RWPE1 (cell line): ENCODE measurements at regions of chr17 and their contacts with region 1.

Region 1: DNA sequence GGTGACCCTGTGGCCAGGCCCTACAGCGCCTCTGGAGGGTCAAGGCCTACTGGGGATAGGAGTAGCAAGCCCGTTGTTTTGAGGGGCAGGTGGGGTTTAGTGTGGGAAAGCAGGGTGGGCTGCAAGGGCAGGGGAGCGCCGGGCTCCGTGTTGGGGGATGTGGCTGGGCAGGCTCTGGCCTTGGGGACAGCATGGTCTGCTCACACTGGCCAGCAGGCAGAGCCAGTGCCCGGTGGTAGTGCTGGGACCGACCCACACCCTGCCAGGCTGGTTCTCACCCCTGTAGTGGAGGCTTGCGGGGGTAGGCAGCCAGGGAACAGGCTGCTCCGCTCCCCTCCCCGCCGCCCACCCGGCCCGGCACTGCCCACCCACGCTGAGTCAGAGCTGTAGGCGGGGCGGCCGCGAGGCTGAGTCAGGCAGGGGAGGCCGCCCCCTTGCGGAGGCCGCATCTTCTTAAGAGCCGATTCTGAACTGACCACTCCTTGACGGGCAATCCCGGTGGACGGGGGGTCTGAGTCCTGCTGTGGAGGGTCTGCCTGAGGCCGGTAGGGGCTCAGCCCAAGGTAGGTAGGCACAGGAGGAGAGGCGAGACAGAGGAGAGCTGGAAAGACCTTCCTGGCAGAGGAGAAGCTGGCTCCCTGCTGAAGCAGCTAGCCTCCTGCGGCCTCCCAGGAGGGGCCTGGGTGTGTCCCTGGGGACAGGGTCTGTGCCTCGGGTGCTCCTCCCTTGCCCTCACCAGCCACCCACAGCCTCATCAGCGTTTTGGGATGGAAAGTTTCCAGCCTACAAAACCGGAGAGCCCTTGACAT is 62.4 kb downstream of the BAIAP2 start:
- DNase-seq: peak; percentile 64
- H3K27ac ChIP-seq: peak overlapping the region; percentile 99
- CTCF ChIP-seq: peak; percentile 87

Region 2: DNA sequence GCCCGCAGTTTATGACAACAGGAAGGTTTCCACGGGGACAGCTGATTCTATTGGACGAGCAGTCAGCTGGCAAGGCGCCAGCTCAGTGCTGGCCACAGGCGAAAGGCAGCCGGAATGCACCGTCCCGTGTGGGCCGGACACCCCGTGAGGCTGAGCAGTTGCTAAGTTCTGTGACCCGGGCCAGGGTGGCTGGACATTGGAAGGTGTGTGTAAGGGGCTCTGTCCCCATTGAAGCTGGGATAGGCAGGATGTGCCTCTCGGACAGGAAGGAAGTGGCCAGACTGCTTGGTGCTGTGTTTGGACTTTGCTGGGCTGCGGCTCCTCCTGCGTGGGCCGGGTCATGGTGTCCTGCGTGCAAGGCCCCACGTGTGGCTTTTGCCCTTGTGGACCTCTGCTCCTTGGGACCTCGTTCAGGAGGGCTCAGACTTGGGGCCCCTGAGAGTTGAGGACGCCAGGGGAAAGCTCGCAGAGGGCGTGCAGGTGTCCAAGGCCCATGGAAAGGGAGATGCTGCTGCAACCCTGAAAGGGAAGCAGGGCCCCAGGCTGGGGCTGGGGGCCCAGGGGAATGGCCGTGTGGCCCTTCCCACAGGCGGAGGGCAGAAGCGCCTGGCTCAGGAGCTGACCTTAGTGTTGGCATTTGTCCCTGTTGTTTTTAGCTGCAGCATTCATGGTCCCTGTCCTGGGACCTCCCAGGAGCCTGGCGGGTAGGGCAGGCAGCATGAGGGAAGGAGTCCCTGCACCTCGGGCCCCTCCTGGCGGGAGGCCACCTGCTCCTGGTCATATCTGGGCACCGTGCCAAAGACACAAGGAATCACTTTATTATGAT is 52.4 kb before region 1 on chr17:
- CTCF ChIA-PET with region 1: interaction called, 12 read pairs
- POLR2A ChIA-PET with region 1: interaction called, 3 read pairs
- DNase-seq: no peak
- H3K27ac ChIP-seq: peak overlapping the region; percentile 98
- CTCF ChIP-seq: no peak

Region 3: DNA sequence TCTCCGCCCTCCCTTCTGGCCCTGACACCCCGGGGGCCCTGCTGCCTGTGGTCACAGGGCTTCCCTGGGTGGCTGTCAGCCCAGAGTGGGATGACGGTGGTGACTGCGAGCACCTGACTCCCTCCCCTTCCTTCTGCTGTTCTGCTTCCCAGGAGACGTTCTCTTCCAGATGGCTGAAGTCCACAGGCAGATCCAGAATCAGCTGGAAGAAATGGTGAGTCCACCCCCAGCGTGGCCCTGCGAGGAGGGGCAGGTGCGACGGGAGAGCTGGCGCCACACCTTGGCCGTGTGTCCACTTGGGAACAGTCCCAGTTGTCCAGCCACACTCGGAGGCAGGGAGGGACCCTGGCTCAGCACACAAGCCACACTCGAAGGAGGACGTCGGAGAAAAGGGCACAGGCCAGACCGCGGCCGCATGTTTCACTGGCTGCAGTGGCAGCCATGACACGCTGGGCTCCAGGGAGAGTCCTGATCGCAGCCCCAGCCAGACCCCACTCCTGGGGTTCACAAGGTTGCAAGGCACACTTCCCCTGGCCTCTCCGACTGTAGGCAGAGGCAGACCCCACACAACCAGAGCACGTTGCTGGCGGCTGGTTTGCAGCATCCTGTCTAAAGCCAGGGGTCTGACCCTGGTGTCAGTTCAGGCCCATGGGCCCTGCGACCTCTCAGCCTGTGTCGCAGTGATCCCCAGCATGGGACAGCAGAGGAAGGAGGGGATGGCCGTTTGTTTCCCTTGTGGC is 12.5 kb before region 1 on chr17:
- CTCF ChIA-PET with region 1: interaction called, 15 read pairs
- POLR2A ChIA-PET with region 1: interaction called, 4 read pairs
- DNase-seq: no peak
- H3K27ac ChIP-seq: peak overlapping the region; percentile 99
- CTCF ChIP-seq: no peak